ENCODE measurements at regions of chr9 and their contacts with region 1.

Region 1: GRCh38 chr9:26665666-26666065 is 226.9 kb downstream of the CAAP1 start:
- DNase-seq: no peak
- ATAC-seq: no peak
- H3K4me3 Mint-ChIP-seq: no peak overlapping the region
- H3K27ac Mint-ChIP-seq: no peak overlapping the region
- H3K4me1 Mint-ChIP-seq: no peaks in the 10 kb centered on the region
- H3K27me3 Mint-ChIP-seq: peaks cover 2% of the 10 kb centered on the region

Region 2: DNA sequence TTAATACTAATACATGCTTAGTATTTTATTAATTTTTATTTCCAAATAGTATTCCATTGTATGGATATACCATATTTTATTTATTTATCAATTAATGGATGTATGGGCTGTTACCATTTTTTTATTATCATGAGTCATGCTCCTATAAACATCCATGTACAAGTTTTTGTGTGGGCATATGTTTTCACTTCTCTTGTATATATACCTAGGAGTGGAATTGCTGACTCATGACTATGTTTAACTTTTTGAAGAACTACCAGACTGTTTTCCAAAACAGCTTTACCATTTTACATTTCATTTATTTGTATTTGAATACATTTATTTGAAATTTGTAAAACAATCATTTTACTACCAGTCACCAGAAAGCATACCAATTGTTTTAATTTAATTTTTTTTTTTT is 353.9 kb after region 1 on chr9:
- CTCF ChIA-PET with region 1: no interaction called
- POLR2A ChIA-PET with region 1: interaction called, 13 read pairs
- intact Hi-C with region 1: no loop called
- DNase-seq: no peak
- ATAC-seq: no peak
- H3K4me3 Mint-ChIP-seq: no peak overlapping the region
- H3K27ac Mint-ChIP-seq: no peak overlapping the region
- H3K4me1 Mint-ChIP-seq: no peaks in the 10 kb centered on the region
- H3K27me3 Mint-ChIP-seq: no peaks in the 10 kb centered on the region

Measured in activated CD4-positive, alpha-beta T cell treated with anti-CD3 and anti-CD28 coated beads for 36 hours (primary cell).